Activated naive CD4-positive, alpha-beta T cell treated with anti-CD3 and anti-CD28 coated beads for 36 hours (primary cell): ENCODE measurements at regions of chr11 and their contacts with region 1.

Region 1: GRCh38 chr11:94511932-94512781 is at the start of gene C11orf97:
- DNase-seq: peak; percentile 49
- H3K4me3 Mint-ChIP-seq: peak within 1 kb of the TSS; percentile 61
- H3K27ac Mint-ChIP-seq: no peak within 1 kb of the TSS
- H3K4me1 Mint-ChIP-seq: peaks cover 7% of the 10 kb centered on the region
- H3K27me3 Mint-ChIP-seq: peaks cover 18% of the 10 kb centered on the region
- total RNA-seq, gene C11orf97: not detected

Region 2: GRCh38 chr11:94602430-94603372 is 90.5 kb after region 1 on chr11:
- CTCF ChIA-PET with region 1: interaction called, 10 read pairs
- intact Hi-C with region 1: no loop called
- DNase-seq: peak; percentile 63
- H3K4me3 Mint-ChIP-seq: no peak overlapping the region
- H3K27ac Mint-ChIP-seq: no peak overlapping the region
- H3K4me1 Mint-ChIP-seq: no peaks in the 10 kb centered on the region
- H3K27me3 Mint-ChIP-seq: no peaks in the 10 kb centered on the region

Region 3: GRCh38 chr11:94635072-94635471 is 122.9 kb after region 1 on chr11:
- CTCF ChIA-PET with region 1: no interaction called
- intact Hi-C with region 1: no loop called
- DNase-seq: no peak
- H3K4me3 Mint-ChIP-seq: no peak overlapping the region
- H3K27ac Mint-ChIP-seq: no peak overlapping the region
- H3K4me1 Mint-ChIP-seq: peaks cover 7% of the 10 kb centered on the region
- H3K27me3 Mint-ChIP-seq: no peaks in the 10 kb centered on the region

Region 4: DNA sequence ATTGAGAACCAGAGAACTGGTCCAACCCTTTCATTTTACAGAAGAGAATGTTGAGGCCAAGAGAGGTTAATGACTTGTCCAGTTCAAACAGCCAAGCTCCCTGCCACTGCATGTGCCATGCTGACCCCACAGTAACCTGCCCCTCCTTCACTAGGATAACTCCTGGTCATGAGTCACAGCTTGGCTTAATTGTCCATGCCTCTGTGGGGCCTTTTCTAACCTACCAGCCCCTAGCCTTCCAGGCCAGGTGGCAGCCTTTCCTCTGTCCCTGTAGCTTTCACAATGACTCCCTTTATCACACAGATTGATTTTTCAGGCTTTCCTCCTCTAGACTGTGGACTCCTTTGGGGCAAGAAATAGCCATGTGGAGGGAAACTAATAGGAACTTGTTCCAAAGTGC is 152.2 kb after region 1 on chr11:
- CTCF ChIA-PET with region 1: no interaction called
- intact Hi-C with region 1: no loop called
- DNase-seq: no peak
- H3K4me3 Mint-ChIP-seq: no peak overlapping the region
- H3K27ac Mint-ChIP-seq: no peak overlapping the region
- H3K4me1 Mint-ChIP-seq: peaks cover 3% of the 10 kb centered on the region
- H3K27me3 Mint-ChIP-seq: peaks cover 6% of the 10 kb centered on the region